ENCODE measurements at regions of chr14 and their contacts with region 1.

Region 1: DNA sequence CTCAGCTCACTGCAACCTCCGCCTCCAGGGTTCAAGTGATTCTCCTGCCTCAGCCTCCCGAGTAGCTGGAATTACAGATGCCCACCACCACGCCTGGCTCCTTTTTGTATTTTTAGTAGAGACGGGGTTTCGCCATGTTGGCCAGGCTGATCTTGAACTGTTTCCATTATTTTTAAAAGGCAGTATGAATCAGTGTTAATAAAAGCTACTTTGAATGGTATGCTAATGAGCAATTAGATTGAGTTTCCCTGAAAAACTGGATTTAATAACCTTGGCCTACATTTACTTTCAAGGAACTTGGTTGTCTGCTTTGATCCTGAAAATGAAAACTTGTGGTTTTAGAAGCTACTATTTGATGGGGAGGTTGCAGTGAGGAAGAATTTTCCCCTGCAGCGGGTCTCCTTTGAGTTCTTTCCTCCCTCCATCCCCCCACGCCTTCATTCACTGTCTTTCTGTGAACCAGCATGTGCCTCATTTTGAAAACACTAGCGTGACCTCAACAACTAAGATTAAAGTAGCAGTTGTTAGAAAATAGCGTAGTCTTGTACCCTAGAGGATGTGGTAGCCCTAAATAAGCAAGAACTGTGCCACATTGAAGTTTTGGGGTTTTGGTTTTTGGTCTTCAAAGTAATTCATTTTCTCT is 17.8 kb upstream of the RPS6KA5 start:
- DNase-seq: peak; percentile 68
- H3K4me3 Mint-ChIP-seq: peak overlapping the region; percentile 51
- H3K27ac Mint-ChIP-seq: peak overlapping the region; percentile 85
- H3K4me1 Mint-ChIP-seq: peaks cover 63% of the 10 kb centered on the region
- H3K27me3 Mint-ChIP-seq: peaks cover 6% of the 10 kb centered on the region

Region 2: DNA sequence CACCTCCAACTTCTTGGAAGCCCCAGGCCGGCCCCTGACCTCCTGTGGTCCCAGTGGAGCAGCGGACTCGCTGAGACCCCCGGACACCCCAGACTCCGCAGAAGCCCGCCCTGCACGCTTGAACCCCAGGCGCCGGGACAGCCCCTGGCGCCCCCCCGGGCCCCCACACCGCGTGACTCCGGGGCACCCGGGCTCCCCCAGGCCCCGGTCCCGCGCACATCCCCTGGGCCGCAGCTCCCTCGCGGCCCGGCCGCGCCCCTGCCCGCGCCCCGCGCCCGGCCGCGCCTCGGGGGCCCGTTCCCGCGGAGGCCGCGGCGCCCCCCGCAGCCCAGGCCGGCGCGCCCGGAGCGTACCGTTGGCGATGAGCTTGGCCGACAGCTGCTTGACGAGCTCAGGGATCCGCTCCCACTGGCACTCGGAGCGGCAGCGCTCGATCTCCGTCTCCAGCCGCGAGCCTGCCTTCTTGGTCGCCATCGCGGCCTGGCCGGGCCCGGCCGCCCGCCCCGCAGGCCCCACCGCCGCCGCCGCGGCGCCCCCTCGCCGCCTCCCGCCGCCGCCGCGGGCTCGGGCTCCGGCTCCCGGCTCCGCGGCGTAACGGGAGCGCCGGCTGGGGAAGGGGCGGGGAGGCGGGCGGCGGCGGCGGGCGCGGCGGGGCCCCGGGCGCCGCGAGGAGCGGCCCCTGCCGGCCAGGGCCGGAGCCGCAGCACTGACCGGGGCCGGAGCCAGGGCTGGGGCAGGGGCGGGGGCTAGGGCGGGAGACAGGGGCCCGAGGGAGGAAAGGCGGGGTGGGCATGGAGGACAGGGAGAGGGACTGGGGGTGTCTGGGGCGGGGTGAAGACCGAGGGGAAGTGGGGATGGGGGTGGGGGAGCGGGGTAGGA is 262.2 kb before region 1 on chr14 and contains the start of gene TTC7B:
- intact Hi-C with region 1: no loop called
- DNase-seq: no peak
- H3K4me3 Mint-ChIP-seq: peak within 1 kb of the TSS; percentile 76
- H3K27ac Mint-ChIP-seq: no peak within 1 kb of the TSS
- H3K4me1 Mint-ChIP-seq: peaks cover 10% of the 10 kb centered on the region
- H3K27me3 Mint-ChIP-seq: peaks cover 42% of the 10 kb centered on the region
- total RNA-seq, gene TTC7B: 3.1 and 4.3 TPM in 2 replicates

Region 3: DNA sequence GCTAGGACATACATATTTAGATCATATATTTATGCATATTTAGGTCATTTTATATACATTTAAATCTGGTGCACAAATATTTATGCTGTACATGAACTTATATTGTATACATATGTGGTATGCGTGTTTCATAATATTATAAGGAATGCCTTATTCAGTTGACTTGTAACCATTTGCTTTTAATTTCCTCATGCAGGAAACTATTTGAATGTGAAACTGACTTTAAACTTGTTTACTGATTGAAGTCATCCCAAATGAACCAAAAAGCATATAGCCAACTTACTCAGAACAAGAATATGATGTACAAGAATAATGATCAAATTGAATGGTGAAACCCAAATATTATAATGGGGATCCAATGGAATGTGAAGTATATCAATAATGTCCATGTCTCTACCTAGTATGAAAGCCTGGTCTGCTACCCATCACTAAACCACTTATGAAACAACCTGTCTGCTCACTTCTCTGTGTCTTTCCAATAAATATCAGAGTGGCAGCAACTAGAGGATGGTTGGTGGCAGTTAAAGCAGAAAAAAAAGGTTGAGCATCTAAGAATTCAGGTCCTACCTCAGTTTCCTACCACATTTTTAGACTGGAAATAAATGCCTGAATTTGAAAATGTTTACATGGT is 56.1 kb before region 1 on chr14:
- intact Hi-C with region 1: loop called (anchors 1 kb)
- DNase-seq: no peak
- H3K4me3 Mint-ChIP-seq: peak overlapping the region; percentile 76
- H3K27ac Mint-ChIP-seq: peak overlapping the region; percentile 94
- H3K4me1 Mint-ChIP-seq: peaks cover 83% of the 10 kb centered on the region
- H3K27me3 Mint-ChIP-seq: no peaks in the 10 kb centered on the region

Region 4: DNA sequence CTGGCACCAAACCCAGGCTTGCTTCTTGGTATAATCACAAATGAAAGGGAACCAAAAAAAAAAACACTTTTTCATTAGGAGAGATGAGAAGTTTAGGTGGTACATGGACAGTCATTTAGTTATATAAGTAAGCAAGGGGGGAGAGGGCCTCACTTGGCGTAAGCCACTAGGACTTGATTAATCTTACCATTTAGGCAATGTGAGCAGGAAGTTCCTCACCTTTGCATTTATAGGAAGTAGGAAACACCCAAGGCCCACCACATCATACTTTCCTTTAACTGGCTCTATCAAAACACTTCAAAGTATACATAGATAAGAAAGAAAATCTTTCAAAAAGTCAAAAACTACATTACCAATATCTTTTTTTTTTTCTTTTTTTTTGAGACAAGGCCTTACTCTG is 11.0 kb before region 1 on chr14:
- intact Hi-C with region 1: loop called (anchors 1 kb)
- DNase-seq: no peak
- H3K4me3 Mint-ChIP-seq: no peak overlapping the region
- H3K27ac Mint-ChIP-seq: peak overlapping the region; percentile 75
- H3K4me1 Mint-ChIP-seq: peaks cover 58% of the 10 kb centered on the region
- H3K27me3 Mint-ChIP-seq: no peaks in the 10 kb centered on the region